T-cell (primary cell): ENCODE measurements at regions of chr17 and their contacts with region 1.

Region 1: DNA sequence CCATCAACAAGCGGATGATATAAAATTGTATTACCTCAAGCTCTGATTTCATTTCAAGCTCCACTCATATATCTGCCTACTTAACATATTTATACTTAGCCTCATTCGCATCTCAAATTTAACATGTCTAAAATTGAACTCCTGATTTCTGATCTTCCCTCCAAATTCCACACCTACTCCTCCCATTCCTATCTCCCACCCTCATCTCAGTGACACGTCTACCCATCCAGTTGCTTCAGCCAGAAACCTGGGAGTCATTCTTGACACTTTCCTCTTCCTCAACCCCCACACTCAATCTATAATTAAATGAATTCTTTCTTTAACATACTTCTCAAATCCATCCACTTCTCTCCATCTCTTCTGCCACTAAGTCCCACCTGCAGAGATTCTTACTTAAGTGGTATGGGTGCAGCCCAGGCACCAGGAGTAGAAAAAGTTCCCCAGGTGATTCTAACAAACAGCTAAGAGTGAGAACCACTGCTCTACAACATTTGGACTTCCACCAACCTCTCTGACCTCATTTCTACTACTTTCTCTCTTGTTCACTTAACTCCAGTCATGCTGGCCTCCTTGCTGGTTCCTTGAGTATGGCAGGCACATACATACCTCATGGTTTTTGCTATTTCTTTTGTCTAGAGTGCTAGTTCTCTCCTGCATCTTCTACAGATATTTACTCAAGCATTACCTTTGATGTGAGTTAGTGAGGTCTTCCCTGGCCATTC is 18.1 kb downstream of the SPOP start:
- DNase-seq: no peak
- ATAC-seq: no peak
- H3K4me3 ChIP-seq: no peak overlapping the region
- H3K4me3 Mint-ChIP-seq: peak overlapping the region in 1 of 3 donors; percentile 6
- H3K27ac ChIP-seq: no peak overlapping the region
- H3K27ac Mint-ChIP-seq: peak overlapping the region in 1 of 2 donors; percentile 41
- H3K4me1 ChIP-seq: peaks cover 0 to 4% of the 10 kb centered on the region in 2 experiments
- H3K4me1 Mint-ChIP-seq: peaks cover 52 to 65% (median 58%) of the 10 kb centered on the region in 3 donors
- H3K27me3 ChIP-seq: no peaks in the 10 kb centered on the region
- H3K27me3 Mint-ChIP-seq: no peaks in the 10 kb centered on the region

Region 2: DNA sequence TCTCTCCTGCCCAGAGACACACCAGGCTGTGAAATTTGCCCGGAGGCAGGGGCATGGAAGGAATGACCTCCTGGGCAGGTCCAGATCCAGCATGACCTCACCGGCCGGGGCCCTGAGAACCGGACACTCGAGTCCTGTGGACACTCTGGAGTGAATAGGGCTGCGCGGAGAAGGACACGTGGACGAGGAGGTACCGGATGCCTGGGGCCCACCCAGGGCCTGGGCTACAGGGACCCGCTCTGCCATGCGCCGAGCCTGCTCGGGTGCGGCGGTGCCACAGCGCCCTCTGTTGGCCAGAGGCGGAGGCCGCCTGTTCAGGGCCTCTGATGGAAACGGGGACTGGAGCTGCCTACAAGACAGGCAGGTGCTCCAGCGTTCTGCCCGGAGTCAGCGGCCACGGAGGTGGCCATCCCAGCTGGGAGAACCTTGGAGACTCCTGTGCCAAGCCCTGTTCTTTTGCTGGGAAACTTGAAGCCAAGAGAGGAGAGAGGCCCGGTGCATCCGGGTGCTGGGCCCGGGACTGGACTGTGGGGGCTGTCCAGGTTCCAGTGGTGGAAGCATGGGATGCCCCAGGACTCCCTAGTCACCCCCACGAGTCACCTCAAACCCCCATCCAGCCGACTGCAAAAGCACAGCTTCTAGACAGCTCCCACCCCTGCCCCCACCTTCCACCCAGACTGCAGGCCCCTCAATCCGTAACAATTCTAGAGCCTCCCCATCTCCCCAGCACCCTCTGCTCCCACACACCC is 103.4 kb before region 1 on chr17:
- CTCF ChIA-PET with region 1: no interaction called
- POLR2A ChIA-PET with region 1: no interaction called
- DNase-seq: peak; percentile 59 to 88 (median 78)
- ATAC-seq: peak; percentile 92 to 98 (median 96)
- H3K4me3 ChIP-seq: no peak overlapping the region
- H3K4me3 Mint-ChIP-seq: no peak overlapping the region
- H3K27ac ChIP-seq: no peak overlapping the region
- H3K27ac Mint-ChIP-seq: no peak overlapping the region
- H3K4me1 ChIP-seq: peaks cover 0 to 10% of the 10 kb centered on the region in 2 experiments
- H3K4me1 Mint-ChIP-seq: peaks cover 0 to 8% (median 5%) of the 10 kb centered on the region in 3 donors
- H3K27me3 ChIP-seq: peaks cover 0 to 22% of the 10 kb centered on the region in 2 experiments
- H3K27me3 Mint-ChIP-seq: peaks cover 4 to 5% of the 10 kb centered on the region in 2 donors

Region 3: GRCh38 chr17:49603720-49604119 is 56.1 kb before region 1 on chr17:
- CTCF ChIA-PET with region 1: interaction called in 1 of 2 experiments, 11 read pairs
- POLR2A ChIA-PET with region 1: no interaction called
- DNase-seq: no peak
- ATAC-seq: no peak
- H3K4me3 ChIP-seq: no peak overlapping the region
- H3K4me3 Mint-ChIP-seq: no peak overlapping the region
- H3K27ac ChIP-seq: no peak overlapping the region
- H3K27ac Mint-ChIP-seq: peak overlapping the region in 1 of 2 donors; percentile 11
- H3K4me1 ChIP-seq: no peaks in the 10 kb centered on the region
- H3K4me1 Mint-ChIP-seq: no peaks in the 10 kb centered on the region
- H3K27me3 ChIP-seq: no peaks in the 10 kb centered on the region
- H3K27me3 Mint-ChIP-seq: no peaks in the 10 kb centered on the region

Region 4: GRCh38 chr17:49677134-49677932 is 17.5 kb after region 1 on chr17:
- CTCF ChIA-PET with region 1: interaction called in 1 of 2 experiments, 5 read pairs
- POLR2A ChIA-PET with region 1: interaction called in 1 of 2 experiments, 13 read pairs
- DNase-seq: peak; percentile 87 to 98 (median 93)
- ATAC-seq: peak; percentile 62 to 67 (median 66)
- H3K4me3 ChIP-seq: peak overlapping the region; percentile 82 to 89
- H3K4me3 Mint-ChIP-seq: peak overlapping the region; percentile 79 to 91 (median 89)
- H3K27ac ChIP-seq: peak overlapping the region; percentile 99
- H3K27ac Mint-ChIP-seq: peak overlapping the region; percentile 95 to 98
- H3K4me1 ChIP-seq: peaks cover 24 to 31% of the 10 kb centered on the region in 2 experiments
- H3K4me1 Mint-ChIP-seq: peaks cover 49 to 57% (median 50%) of the 10 kb centered on the region in 3 donors
- H3K27me3 ChIP-seq: no peaks in the 10 kb centered on the region
- H3K27me3 Mint-ChIP-seq: no peaks in the 10 kb centered on the region

Region 5: DNA sequence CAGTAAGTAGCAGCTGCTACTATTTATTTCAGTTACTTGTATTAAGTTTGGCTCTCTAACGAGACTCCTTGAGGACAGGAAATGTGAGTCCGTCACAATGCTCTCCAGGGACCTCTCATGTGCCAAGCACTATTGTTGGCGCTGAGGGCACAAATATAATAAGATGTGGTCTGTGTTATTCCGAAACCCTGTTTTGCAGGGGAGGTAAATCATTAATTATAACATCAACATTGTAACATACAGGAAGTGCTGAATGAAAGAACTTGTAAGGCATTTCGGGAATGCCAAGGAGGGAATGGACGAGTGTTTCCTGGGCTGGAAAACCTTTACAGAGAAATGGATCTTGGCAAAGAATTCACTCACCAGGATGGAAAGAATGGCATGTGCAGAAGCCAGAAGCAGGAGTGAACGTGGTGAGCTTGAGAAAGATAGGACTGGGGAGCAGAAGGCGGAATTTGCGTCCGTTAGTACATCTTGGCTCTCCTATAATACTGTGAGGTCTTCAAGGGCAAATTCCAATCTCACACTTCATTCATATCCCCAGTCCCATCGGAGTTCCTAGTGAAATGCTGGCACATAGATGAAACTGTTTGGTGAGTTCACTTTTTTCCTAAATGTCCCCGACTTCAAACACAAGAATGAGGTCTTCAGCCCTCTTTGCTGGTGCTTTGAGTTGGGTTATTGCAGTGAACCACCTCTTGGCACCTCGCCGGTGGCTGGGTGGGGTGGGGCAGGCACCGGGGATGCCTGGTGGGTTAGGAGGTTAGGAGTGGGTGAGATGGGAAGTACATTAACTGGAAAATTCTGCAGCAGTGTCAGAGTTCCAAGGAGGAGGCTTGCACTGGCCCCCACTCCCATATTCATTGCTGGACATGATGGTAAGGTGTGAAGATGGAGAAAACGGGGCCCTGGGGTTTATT is 176.5 kb after region 1 on chr17:
- CTCF ChIA-PET with region 1: no interaction called
- POLR2A ChIA-PET with region 1: no interaction called
- DNase-seq: no peak
- ATAC-seq: no peak
- H3K4me3 ChIP-seq: no peak overlapping the region
- H3K4me3 Mint-ChIP-seq: no peak overlapping the region
- H3K27ac ChIP-seq: no peak overlapping the region
- H3K27ac Mint-ChIP-seq: peak overlapping the region in 1 of 2 donors; percentile 25
- H3K4me1 ChIP-seq: no peaks in the 10 kb centered on the region
- H3K4me1 Mint-ChIP-seq: peaks cover 0 to 11% (median 7%) of the 10 kb centered on the region in 3 donors
- H3K27me3 ChIP-seq: no peaks in the 10 kb centered on the region
- H3K27me3 Mint-ChIP-seq: no peaks in the 10 kb centered on the region